ENCODE measurements at regions of chr13 and their contacts with region 1.

Region 1: GRCh38 chr13:99228737-99229691 is 28.4 kb downstream of the UBAC2 start:
- DNase-seq: peak; percentile 87
- ATAC-seq: peak; percentile 79
- H3K4me3 ChIP-seq: peak overlapping the region; percentile 16 to 56 (median 49)
- H3K4me3 Mint-ChIP-seq: peak overlapping the region; percentile 86
- H3K27ac ChIP-seq: peak overlapping the region; percentile 65 to 74
- H3K27ac Mint-ChIP-seq: peak overlapping the region; percentile 80
- H3K4me1 ChIP-seq: peaks cover 84 to 86% of the 10 kb centered on the region in 2 donors
- H3K4me1 Mint-ChIP-seq: peaks cover 77% of the 10 kb centered on the region
- H3K27me3 ChIP-seq: no peaks in the 10 kb centered on the region
- H3K27me3 Mint-ChIP-seq: no peaks in the 10 kb centered on the region
- CTCF ChIP-seq: no peak

Region 2: GRCh38 chr13:98476538-98476966 is 752.5 kb before region 1 on chr13:
- CTCF ChIA-PET with region 1: no interaction called
- POLR2A ChIA-PET with region 1: no interaction called
- intact Hi-C with region 1: no loop called
- DNase-seq: peak; percentile 71
- ATAC-seq: peak; percentile 94
- H3K4me3 ChIP-seq: peak overlapping the region in 2 of 5 experiments; percentile 0 to 2
- H3K4me3 Mint-ChIP-seq: peak overlapping the region; percentile 76
- H3K27ac ChIP-seq: peak overlapping the region; percentile 33 to 76
- H3K27ac Mint-ChIP-seq: peak overlapping the region; percentile 85
- H3K4me1 ChIP-seq: peaks cover 38 to 42% of the 10 kb centered on the region in 2 donors
- H3K4me1 Mint-ChIP-seq: peaks cover 45% of the 10 kb centered on the region
- H3K27me3 ChIP-seq: no peaks in the 10 kb centered on the region
- H3K27me3 Mint-ChIP-seq: no peaks in the 10 kb centered on the region
- CTCF ChIP-seq: no peak

Region 3: GRCh38 chr13:99214232-99214631 is 14.8 kb before region 1 on chr13:
- CTCF ChIA-PET with region 1: interaction called, 3 read pairs
- POLR2A ChIA-PET with region 1: interaction called, 6 read pairs
- intact Hi-C with region 1: loop called (anchors 2 kb)
- DNase-seq: peak; percentile 42
- ATAC-seq: peak; percentile 52
- H3K4me3 ChIP-seq: no peak overlapping the region
- H3K4me3 Mint-ChIP-seq: peak overlapping the region; percentile 9
- H3K27ac ChIP-seq: peak overlapping the region in 1 of 2 donors; percentile 40
- H3K27ac Mint-ChIP-seq: peak overlapping the region; percentile 7
- H3K4me1 ChIP-seq: peaks cover 47 to 48% of the 10 kb centered on the region in 2 donors
- H3K4me1 Mint-ChIP-seq: peaks cover 67% of the 10 kb centered on the region
- H3K27me3 ChIP-seq: no peaks in the 10 kb centered on the region
- H3K27me3 Mint-ChIP-seq: no peaks in the 10 kb centered on the region
- CTCF ChIP-seq: no peak

Region 4: GRCh38 chr13:99258210-99258860 is 29.3 kb after region 1 on chr13 and contains the start of gene GPR18:
- CTCF ChIA-PET with region 1: interaction called, 34 read pairs
- POLR2A ChIA-PET with region 1: interaction called, 9 read pairs
- intact Hi-C with region 1: loop called (anchors 1 kb)
- DNase-seq: peak; percentile 75
- ATAC-seq: peak; percentile 66
- H3K4me3 ChIP-seq: peak within 1 kb of the TSS; percentile 60 to 98 (median 79)
- H3K4me3 Mint-ChIP-seq: peak within 1 kb of the TSS; percentile 98
- H3K27ac ChIP-seq: peak within 1 kb of the TSS; percentile 86 to 90
- H3K27ac Mint-ChIP-seq: peak within 1 kb of the TSS; percentile 96
- H3K4me1 ChIP-seq: peaks cover 57 to 68% of the 10 kb centered on the region in 2 donors
- H3K4me1 Mint-ChIP-seq: peaks cover 81% of the 10 kb centered on the region
- H3K27me3 ChIP-seq: no peaks in the 10 kb centered on the region
- H3K27me3 Mint-ChIP-seq: no peaks in the 10 kb centered on the region
- CTCF ChIP-seq: no peak
- total RNA-seq, gene GPR18: 17.6 and 19.1 TPM in 2 replicates

Region 5: DNA sequence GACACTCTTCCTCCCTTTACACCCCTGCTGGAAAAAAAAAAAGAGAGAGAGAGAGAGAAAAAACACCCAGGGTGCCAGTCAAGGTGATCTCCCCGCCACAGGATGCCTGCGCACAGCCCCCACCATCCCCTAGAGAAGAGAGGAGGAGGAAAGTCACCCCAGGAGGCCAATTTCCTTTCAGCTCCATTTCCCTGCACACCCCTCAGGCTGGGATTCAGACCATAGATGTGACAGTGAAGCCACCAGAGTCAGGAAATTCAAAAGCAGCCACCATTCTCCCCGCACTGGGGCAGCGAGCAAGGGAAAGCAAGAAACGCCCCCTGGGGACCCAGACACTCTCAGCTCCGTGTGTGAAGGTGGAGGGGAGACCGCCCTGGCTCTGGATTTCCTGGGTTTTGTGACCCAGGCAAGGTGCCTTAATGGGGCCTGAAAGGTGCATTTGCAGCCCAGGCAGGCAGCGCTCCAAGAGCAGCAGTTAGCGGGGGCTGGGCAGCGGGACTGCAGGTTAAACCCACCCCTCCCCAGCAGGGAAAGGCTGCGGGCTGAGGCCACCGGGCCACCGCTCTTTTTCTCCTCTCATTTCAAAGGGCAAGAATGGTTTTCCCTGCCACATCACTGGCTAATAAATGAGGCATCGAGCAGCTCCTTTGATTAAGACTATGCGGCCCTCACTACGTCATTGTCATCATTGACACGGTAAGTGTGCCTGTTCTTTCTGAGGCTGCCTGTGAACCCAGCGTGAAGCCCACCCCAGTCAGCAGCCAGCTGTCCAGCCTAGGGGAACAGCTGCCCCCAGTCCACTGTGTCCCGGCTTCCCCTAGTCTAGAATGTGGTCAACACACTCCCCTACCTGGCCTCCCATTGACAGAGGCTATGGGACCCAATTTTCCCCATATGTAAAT is 188.4 kb after region 1 on chr13:
- CTCF ChIA-PET with region 1: no interaction called
- POLR2A ChIA-PET with region 1: no interaction called
- intact Hi-C with region 1: loop called (anchors 1 kb)
- DNase-seq: no peak
- ATAC-seq: no peak
- H3K4me3 ChIP-seq: no peak overlapping the region
- H3K4me3 Mint-ChIP-seq: no peak overlapping the region
- H3K27ac ChIP-seq: no peak overlapping the region
- H3K27ac Mint-ChIP-seq: peak overlapping the region; percentile 67
- H3K4me1 ChIP-seq: peaks cover 51 to 58% of the 10 kb centered on the region in 2 donors
- H3K4me1 Mint-ChIP-seq: peaks cover 48% of the 10 kb centered on the region
- H3K27me3 ChIP-seq: peaks cover 0 to 3% (median 0%) of the 10 kb centered on the region in 4 experiments
- H3K27me3 Mint-ChIP-seq: no peaks in the 10 kb centered on the region
- CTCF ChIP-seq: no peak

Measured in B cell (primary cell).